K562 (cell line): ENCODE measurements at regions of chr15 and their contacts with region 1.

Region 1: GRCh38 chr15:32657198-32657883 is 15.8 kb downstream of the SCG5 start:
- DNase-seq: peak in 1 of 4 experiments; percentile 22
- ATAC-seq: peak; percentile 65
- H3K4me3 ChIP-seq: no peak overlapping the region
- H3K27ac ChIP-seq: no peak overlapping the region
- H3K4me1 ChIP-seq: peaks cover 0 to 20% of the 10 kb centered on the region in 2 experiments; a peak in 3 of 5 replicates
- H3K27me3 ChIP-seq: no peaks in the 10 kb centered on the region
- CTCF ChIP-seq: peak in 2 of 3 experiments; percentile 14 to 25; a peak in 3 of 6 replicates
- EP300 ChIP-seq: no peak
- POLR2A ChIP-seq: no peak
- RAD21 ChIP-seq: 0 out of 4 replicates have a peak, but pooled peaks of 1 of the 2 experiments have one; percentile 15

Region 2: GRCh38 chr15:32838820-32839219 is 181.5 kb after region 1 on chr15:
- CTCF ChIA-PET with region 1: no interaction called
- POLR2A ChIA-PET with region 1: no interaction called
- in situ Hi-C with region 1: no loop called
- intact Hi-C with region 1: loop called (anchors 10 kb)
- DNase-seq: peak in 1 of 4 experiments; percentile 6
- ATAC-seq: peak; percentile 36; the same call in 2 of the 3 replicates
- H3K4me3 ChIP-seq: no peak overlapping the region
- H3K27ac ChIP-seq: no peak overlapping the region
- H3K4me1 ChIP-seq: no peaks in the 10 kb centered on the region
- H3K27me3 ChIP-seq: peaks cover 12 to 29% of the 10 kb centered on the region in 2 experiments; a peak in 4 of 5 replicates
- CTCF ChIP-seq: no peak
- EP300 ChIP-seq: no peak
- POLR2A ChIP-seq: no peak
- RAD21 ChIP-seq: no peak

Region 3: GRCh38 chr15:32994810-32995424 is 337.6 kb after region 1 on chr15:
- CTCF ChIA-PET with region 1: interaction called, 34 read pairs
- POLR2A ChIA-PET with region 1: no interaction called
- in situ Hi-C with region 1: loop called (anchors 5 kb)
- intact Hi-C with region 1: loop called (anchors 1 kb)
- DNase-seq: peak; percentile 23 to 26 (median 25)
- ATAC-seq: peak; percentile 71
- H3K4me3 ChIP-seq: no peak overlapping the region
- H3K27ac ChIP-seq: no peak overlapping the region
- H3K4me1 ChIP-seq: no peaks in the 10 kb centered on the region
- H3K27me3 ChIP-seq: no peaks in the 10 kb centered on the region; a peak in 2 of 5 replicates
- CTCF ChIP-seq: peak in 2 of 3 experiments; percentile 22 to 64; a peak in 3 of 6 replicates
- EP300 ChIP-seq: no peak
- POLR2A ChIP-seq: no peak
- RAD21 ChIP-seq: peak; percentile 33 to 54

Region 4: GRCh38 chr15:33132722-33133345 is 475.5 kb after region 1 on chr15:
- CTCF ChIA-PET with region 1: no interaction called
- POLR2A ChIA-PET with region 1: no interaction called
- in situ Hi-C with region 1: loop called (anchors 10 kb)
- intact Hi-C with region 1: loop called (anchors 5 kb)
- DNase-seq: peak; percentile 30 to 35 (median 32)
- ATAC-seq: peak; percentile 80
- H3K4me3 ChIP-seq: no peak overlapping the region
- H3K27ac ChIP-seq: no peak overlapping the region
- H3K4me1 ChIP-seq: no peaks in the 10 kb centered on the region
- H3K27me3 ChIP-seq: no peaks in the 10 kb centered on the region
- CTCF ChIP-seq: peak; percentile 43 to 71 (median 59); a peak in 4 of 6 replicates
- EP300 ChIP-seq: no peak
- POLR2A ChIP-seq: no peak
- RAD21 ChIP-seq: peak; percentile 45 to 66